ENCODE measurements at regions of chr10 and their contacts with region 1.

Region 1: DNA sequence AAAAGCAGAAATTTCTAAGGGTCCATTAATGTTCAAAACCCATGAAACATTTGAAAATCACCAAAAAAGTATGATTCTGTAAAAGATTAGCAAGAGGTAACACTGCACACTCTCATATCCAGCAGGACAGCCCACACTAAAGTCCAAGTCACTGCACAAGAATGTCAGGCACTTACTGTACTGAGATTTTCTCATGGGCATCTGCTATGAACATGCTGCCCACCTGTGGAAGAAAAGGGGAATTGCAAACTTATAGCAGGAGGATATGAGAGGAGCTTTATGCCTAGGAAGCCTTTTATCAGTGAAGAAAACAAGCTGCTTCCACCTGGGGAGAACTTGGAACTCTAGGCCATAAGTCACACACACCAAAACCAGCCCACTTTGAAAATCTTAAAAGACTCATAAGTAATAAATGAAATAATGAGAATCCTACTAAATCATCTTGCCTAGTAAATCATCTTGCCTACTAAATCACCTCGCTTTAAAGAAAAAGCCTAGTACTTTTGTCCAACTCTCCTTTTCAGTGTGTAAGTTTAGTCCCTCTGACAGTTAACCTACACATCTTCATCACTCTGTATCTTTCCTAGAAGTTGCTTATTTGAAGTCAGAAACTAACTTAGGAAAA is 46.1 kb downstream of the ARMH3 start:
- DNase-seq: peak; percentile 72
- CTCF ChIP-seq: peak; percentile 94

Region 2: GRCh38 chr10:101840741-101841453 is 169.0 kb before region 1 on chr10:
- CTCF ChIA-PET with region 1: interaction called, 831 read pairs
- POLR2A ChIA-PET with region 1: interaction called, 9 read pairs
- DNase-seq: peak; percentile 89
- CTCF ChIP-seq: peak; percentile 97

Region 3: GRCh38 chr10:101889256-101890210 is 120.4 kb before region 1 on chr10:
- CTCF ChIA-PET with region 1: interaction called, 249 read pairs
- POLR2A ChIA-PET with region 1: no interaction called
- DNase-seq: peak; percentile 72
- CTCF ChIP-seq: peak; percentile 82

Region 4: DNA sequence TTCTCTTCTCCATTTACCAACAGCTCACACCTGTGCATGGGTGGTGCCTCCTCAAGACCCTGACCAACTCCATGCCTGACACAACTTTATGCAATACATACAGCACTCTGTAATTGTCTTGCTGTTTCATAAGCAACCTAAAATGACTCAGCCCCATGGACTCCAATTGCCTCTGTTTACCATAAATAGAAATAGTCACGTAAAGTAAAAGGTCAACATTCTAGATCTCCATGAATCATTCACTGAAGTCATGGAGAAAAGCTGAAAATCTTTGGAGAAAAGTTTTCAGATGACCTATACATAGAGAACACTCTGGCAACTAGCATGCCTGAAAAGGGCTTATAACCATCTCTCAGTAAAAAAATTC is 70.6 kb before region 1 on chr10:
- CTCF ChIA-PET with region 1: interaction called, 10 read pairs
- POLR2A ChIA-PET with region 1: no interaction called
- DNase-seq: no peak
- CTCF ChIP-seq: no peak

Region 5: DNA sequence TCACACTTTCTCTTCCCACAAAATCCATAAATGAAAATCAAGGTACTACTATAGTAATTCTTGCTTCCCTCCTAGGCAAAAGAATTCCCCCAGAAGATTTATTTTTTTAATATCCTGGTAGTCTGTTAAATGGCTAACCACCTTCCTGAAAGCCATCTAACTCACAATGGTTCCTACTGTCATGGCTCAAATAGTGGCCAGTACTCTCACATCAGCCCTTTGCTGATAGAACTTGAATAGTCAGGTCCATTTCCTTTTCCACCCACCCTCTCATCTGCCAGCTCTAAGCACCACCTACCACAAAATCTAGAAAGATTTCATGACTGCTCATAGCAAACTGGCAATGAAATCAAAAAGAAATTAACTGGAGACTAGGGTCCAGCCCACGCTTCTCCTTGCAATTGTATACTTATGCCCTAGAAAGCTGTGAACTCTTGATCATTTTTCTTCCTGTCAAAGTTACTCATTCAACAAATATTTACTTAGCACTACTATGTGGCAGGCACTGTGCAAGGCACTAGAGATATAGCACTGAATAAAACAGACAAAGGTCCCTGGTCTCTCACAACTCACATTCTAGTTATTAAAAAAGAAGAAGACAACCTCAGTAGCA is 14.4 kb before region 1 on chr10:
- CTCF ChIA-PET with region 1: interaction called, 42 read pairs
- POLR2A ChIA-PET with region 1: no interaction called
- DNase-seq: no peak
- CTCF ChIP-seq: no peak

Region 6: GRCh38 chr10:102072673-102073527 is 63.0 kb after region 1 on chr10:
- CTCF ChIA-PET with region 1: interaction called, 55 read pairs
- POLR2A ChIA-PET with region 1: interaction called, 8 read pairs
- DNase-seq: peak; percentile 83
- CTCF ChIP-seq: peak; percentile 88

Region 7: GRCh38 chr10:102200751-102201640 is 191.1 kb after region 1 on chr10:
- CTCF ChIA-PET with region 1: no interaction called
- POLR2A ChIA-PET with region 1: no interaction called
- DNase-seq: no peak
- CTCF ChIP-seq: no peak